HepG2 (cell line): ENCODE measurements at regions of chr3 and their contacts with region 1.

Region 1: GRCh38 chr3:191809326-191809949 is 348.5 kb downstream of the PYDC2 start:
- DNase-seq: peak; percentile 43
- ATAC-seq: peak; percentile 96
- H3K4me3 ChIP-seq: no peak overlapping the region
- H3K27ac ChIP-seq: no peak overlapping the region
- H3K4me1 ChIP-seq: peaks cover 11% of the 10 kb centered on the region
- H3K27me3 ChIP-seq: no peaks in the 10 kb centered on the region
- CTCF ChIP-seq: peak; percentile 72
- EP300 ChIP-seq: no peak
- POLR2A ChIP-seq: no peak
- RAD21 ChIP-seq: peak; percentile 77

Region 2: GRCh38 chr3:191412759-191413158 is 396.7 kb before region 1 on chr3:
- CTCF ChIA-PET with region 1: interaction called, 18 read pairs
- POLR2A ChIA-PET with region 1: no interaction called
- in situ Hi-C with region 1: loop called (anchors 10 kb)
- intact Hi-C with region 1: loop called (anchors 1 kb)
- DNase-seq: no peak
- ATAC-seq: no peak
- H3K4me3 ChIP-seq: no peak overlapping the region
- H3K27ac ChIP-seq: no peak overlapping the region
- H3K4me1 ChIP-seq: no peaks in the 10 kb centered on the region
- H3K27me3 ChIP-seq: no peaks in the 10 kb centered on the region
- CTCF ChIP-seq: no peak
- EP300 ChIP-seq: no peak
- POLR2A ChIP-seq: no peak
- RAD21 ChIP-seq: no peak

Region 3: DNA sequence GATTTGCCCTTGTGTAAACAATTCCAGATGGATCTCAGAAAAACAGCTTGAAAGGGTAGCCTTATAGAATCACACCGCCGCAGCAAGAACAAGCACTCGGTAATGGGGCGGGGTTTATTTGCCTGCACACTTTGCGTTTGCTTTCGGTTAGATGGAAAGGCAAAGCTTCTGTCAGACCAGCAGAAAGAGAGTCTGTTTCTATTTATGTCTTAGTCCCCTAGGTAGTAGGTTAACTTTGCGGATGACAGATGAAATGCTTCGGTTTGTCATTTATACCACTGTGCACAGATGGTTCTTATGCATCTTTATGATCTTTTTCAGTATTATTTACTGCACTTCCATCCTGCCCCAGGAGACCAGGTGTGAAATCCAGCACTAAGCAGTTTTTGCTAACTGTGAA is 286.3 kb before region 1 on chr3:
- CTCF ChIA-PET with region 1: no interaction called
- POLR2A ChIA-PET with region 1: no interaction called
- in situ Hi-C with region 1: no loop called
- intact Hi-C with region 1: loop called (anchors 1 kb)
- DNase-seq: no peak
- ATAC-seq: no peak
- H3K4me3 ChIP-seq: no peak overlapping the region
- H3K27ac ChIP-seq: no peak overlapping the region
- H3K4me1 ChIP-seq: no peaks in the 10 kb centered on the region
- H3K27me3 ChIP-seq: no peaks in the 10 kb centered on the region
- CTCF ChIP-seq: no peak
- EP300 ChIP-seq: no peak
- POLR2A ChIP-seq: no peak
- RAD21 ChIP-seq: no peak

Region 4: DNA sequence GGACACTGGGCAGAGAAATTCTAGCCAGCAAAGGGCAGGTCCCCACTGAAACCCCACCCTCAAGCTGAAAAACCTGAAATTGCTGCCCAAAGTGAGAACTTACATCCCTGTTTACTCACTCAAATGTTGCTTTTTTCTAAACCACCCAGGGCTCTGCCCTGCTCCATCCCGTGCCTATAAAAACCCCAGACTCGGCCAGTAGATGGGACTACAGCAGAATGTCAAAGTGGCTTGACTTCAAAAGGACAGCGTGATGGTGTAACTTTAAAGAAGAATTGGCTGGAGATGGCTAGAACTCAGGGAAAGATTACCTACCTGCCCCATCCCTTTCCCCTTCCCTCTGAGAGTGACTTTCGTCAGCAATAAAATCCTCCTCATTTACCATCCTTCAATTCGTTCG is 101.6 kb before region 1 on chr3:
- CTCF ChIA-PET with region 1: no interaction called
- POLR2A ChIA-PET with region 1: no interaction called
- in situ Hi-C with region 1: no loop called
- intact Hi-C with region 1: loop called (anchors 1 kb)
- DNase-seq: peak; percentile 3
- ATAC-seq: peak; percentile 96
- H3K4me3 ChIP-seq: no peak overlapping the region
- H3K27ac ChIP-seq: no peak overlapping the region
- H3K4me1 ChIP-seq: no peaks in the 10 kb centered on the region
- H3K27me3 ChIP-seq: no peaks in the 10 kb centered on the region
- CTCF ChIP-seq: peak; percentile 46
- EP300 ChIP-seq: no peak
- POLR2A ChIP-seq: no peak
- RAD21 ChIP-seq: no peak